MCF 10A (cell line): ENCODE measurements at regions of chr21 and their contacts with region 1.

Region 1: DNA sequence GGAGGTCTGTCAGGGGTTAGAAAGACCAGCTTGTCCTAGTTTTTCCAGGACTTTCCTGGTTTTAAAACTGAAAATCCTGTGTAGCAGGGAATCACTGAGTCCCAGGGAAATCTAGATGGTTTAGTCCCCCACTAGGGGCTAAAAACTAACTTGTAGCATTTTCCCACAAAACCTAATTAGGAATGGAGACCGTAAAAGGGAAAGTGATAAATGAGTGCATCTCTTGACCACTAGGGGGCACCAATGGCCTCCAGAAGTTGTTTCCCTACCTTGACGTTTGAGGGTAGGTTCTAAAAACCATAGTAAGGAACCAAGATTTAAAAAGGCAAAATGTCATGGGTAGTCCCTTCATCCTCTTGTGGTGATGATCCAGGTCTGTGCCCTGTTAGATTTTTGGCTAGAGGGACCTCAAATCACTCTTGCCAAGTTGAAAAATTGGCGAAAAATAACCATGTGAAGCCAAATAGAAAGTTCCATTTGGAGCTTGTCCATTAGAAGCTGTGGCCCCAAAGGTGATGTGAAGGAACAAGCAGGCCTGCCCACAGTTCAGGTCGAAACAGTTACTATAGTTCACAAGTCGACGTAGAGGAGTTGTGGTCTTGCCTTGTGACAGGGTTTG is 24.5 kb downstream of the CLIC6 start:
- DNase-seq: peak; percentile 78
- H3K4me3 Mint-ChIP-seq: no peak overlapping the region
- H3K27ac Mint-ChIP-seq: no peak overlapping the region
- H3K4me1 Mint-ChIP-seq: no peaks in the 10 kb centered on the region
- H3K27me3 Mint-ChIP-seq: no peaks in the 10 kb centered on the region
- CTCF ChIP-seq: peak; percentile 77

Region 2: DNA sequence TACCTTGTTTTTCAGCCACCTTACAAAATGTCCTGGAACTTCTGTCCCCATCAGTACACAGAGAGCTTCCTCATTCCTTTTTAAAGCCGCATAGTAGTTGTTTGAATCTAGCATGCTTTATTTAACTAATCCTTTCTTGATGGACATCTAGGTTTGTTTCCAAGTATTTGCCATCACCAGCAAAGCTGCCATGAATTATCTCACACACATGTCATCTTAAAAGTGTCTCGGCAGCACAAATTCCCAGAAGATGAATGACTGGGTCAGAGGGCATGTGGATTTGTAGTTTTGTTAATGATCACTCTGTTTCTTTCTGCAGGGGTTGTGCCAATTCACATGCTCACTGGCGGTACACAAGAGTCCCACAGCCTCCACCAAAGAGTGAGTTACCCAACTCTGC is 43.8 kb after region 1 on chr21:
- CTCF ChIA-PET with region 1: interaction called, 17 read pairs
- POLR2A ChIA-PET with region 1: interaction called, 7 read pairs
- intact Hi-C with region 1: no loop called
- DNase-seq: peak; percentile 22
- H3K4me3 Mint-ChIP-seq: no peak overlapping the region
- H3K27ac Mint-ChIP-seq: peak overlapping the region; percentile 24
- H3K4me1 Mint-ChIP-seq: peaks cover 49% of the 10 kb centered on the region
- H3K27me3 Mint-ChIP-seq: no peaks in the 10 kb centered on the region
- CTCF ChIP-seq: no peak

Region 3: GRCh38 chr21:34845521-34846451 is 152.5 kb after region 1 on chr21:
- CTCF ChIA-PET with region 1: interaction called, 6 read pairs
- POLR2A ChIA-PET with region 1: interaction called, 3 read pairs
- intact Hi-C with region 1: loop called (anchors 2 kb)
- DNase-seq: peak; percentile 94
- H3K4me3 Mint-ChIP-seq: peak overlapping the region; percentile 60
- H3K27ac Mint-ChIP-seq: peak overlapping the region; percentile 92
- H3K4me1 Mint-ChIP-seq: peaks cover 47% of the 10 kb centered on the region
- H3K27me3 Mint-ChIP-seq: no peaks in the 10 kb centered on the region
- CTCF ChIP-seq: no peak

Region 4: GRCh38 chr21:35400233-35400957 is 707.1 kb after region 1 on chr21:
- CTCF ChIA-PET with region 1: interaction called, 6 read pairs
- POLR2A ChIA-PET with region 1: interaction called, 3 read pairs
- intact Hi-C with region 1: loop called (anchors 1 kb)
- DNase-seq: peak; percentile 74
- H3K4me3 Mint-ChIP-seq: no peak overlapping the region
- H3K27ac Mint-ChIP-seq: peak overlapping the region; percentile 10
- H3K4me1 Mint-ChIP-seq: peaks cover 17% of the 10 kb centered on the region
- H3K27me3 Mint-ChIP-seq: no peaks in the 10 kb centered on the region
- CTCF ChIP-seq: peak; percentile 65

Region 5: GRCh38 chr21:35940074-35940927 is 1247.0 kb after region 1 on chr21:
- CTCF ChIA-PET with region 1: no interaction called
- POLR2A ChIA-PET with region 1: no interaction called
- intact Hi-C with region 1: loop called (anchors 2 kb)
- DNase-seq: peak; percentile 74
- H3K4me3 Mint-ChIP-seq: no peak overlapping the region
- H3K27ac Mint-ChIP-seq: no peak overlapping the region
- H3K4me1 Mint-ChIP-seq: no peaks in the 10 kb centered on the region
- H3K27me3 Mint-ChIP-seq: no peaks in the 10 kb centered on the region
- CTCF ChIP-seq: peak; percentile 66